ENCODE measurements at regions of chr2 and their contacts with region 1.

Region 1: DNA sequence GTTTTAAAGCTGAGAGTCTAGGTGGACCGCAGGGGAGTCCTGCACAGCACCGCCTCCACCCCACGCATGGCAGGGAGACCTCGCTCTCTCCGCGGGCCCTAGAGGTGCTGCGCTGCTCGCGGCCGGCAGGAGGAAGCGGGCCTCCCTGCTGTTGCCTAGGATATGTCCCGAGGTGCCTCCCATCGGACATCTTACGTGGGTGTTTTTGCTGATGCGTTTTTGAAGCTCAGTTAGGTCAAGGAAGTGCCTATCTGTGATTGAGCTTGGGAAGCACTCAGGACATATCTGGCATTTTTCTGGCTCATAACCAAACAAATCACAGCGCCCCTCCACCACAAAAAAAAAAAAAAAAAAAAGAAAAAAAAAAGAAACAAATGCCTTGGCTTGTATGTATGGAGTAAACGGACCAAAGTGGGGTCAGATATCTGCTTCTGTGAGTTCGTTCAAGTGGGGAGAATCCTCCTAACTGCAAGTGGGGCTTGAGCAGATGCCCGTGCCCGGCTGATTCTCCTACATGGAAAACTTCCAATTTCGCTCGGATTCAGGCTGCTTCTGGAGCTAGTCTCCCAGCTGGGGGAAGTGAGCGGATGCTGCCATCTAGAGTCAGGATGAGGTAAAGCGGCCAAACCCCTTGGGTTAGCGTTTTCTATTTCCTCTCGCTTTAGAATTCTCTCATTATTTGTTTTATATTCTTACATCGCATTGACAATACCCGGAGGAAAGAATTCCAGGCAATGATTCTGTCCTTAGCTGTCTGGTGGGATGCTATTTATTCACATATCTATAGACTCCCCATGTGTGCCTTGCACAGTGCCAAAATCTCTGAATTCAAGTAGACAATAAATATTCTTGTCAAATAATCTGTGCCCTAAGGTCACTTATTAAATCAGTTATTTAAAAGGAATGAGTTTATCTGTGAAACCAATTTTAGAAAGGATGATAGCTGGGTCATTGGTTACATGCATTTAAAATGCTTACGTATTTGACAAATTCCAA is 95.3 kb downstream of the CD8B2 start:
- DNase-seq: peak; percentile 75
- ATAC-seq: peak; percentile 82
- H3K4me3 Mint-ChIP-seq: peak overlapping the region; percentile 82
- H3K27ac Mint-ChIP-seq: no peak overlapping the region
- H3K4me1 Mint-ChIP-seq: peaks cover 12% of the 10 kb centered on the region
- H3K27me3 Mint-ChIP-seq: peaks cover 55% of the 10 kb centered on the region
- CTCF ChIP-seq: peak; percentile 61; the same call in 1 of the 2 replicates

Region 2: DNA sequence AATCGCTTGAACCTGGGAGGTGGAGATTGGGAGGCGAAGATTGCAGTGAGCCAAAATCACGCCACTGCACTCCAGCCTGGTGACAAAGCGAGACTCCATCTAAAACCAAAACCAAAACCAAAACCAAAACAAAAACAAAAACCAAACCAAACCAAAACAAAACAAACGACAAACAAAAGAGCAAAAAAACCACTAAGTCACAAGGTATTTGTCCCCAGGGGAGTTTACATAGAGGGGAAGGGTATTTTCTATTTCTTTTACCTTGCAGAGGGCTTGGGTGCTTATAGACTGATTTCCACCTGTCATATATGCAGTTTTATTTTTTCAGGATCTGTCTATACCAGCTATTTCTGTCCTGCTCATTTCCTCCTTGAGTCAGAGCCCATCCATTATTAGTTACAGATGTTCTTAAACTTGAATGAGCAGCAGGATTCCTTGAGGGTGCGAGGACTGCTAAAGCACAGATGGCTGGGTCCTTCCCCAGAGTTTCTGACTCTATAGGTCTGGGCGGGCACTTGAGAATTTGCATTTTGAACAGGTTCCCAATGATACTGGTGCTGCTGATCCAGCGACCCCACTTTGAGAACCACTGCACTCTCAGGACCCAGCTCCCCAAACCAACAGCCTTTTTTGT is 286.1 kb before region 1 on chr2:
- CTCF ChIA-PET with region 1: no interaction called
- POLR2A ChIA-PET with region 1: no interaction called
- DNase-seq: no peak
- ATAC-seq: no peak
- H3K4me3 Mint-ChIP-seq: no peak overlapping the region
- H3K27ac Mint-ChIP-seq: no peak overlapping the region
- H3K4me1 Mint-ChIP-seq: no peaks in the 10 kb centered on the region
- H3K27me3 Mint-ChIP-seq: no peaks in the 10 kb centered on the region
- CTCF ChIP-seq: no peak

Region 3: DNA sequence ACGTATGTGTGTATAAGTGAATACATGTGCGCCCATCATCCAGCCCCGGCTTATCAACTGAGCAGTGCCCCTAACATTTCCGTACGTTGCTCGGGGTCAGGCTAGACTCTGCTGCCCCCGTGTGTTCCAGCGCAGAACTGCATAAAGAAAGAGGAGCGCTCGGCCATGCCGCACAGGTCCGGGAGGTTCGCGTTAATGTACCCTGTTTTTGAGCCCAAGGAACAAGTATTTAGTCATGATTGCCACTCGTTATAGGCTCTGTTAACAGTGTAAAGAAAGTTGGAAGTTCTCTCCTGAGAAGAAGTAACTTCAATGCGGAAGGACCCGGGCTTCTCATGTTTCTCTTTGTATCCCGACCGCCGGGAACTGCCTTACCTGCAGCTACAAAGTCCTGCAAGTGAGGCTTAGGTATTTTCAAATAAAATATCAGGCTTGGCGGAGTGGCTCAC is 39.6 kb before region 1 on chr2:
- CTCF ChIA-PET with region 1: interaction called, 10 read pairs
- POLR2A ChIA-PET with region 1: no interaction called
- DNase-seq: peak; percentile 86
- ATAC-seq: peak; percentile 91
- H3K4me3 Mint-ChIP-seq: peak overlapping the region; percentile 67
- H3K27ac Mint-ChIP-seq: no peak overlapping the region
- H3K4me1 Mint-ChIP-seq: no peaks in the 10 kb centered on the region
- H3K27me3 Mint-ChIP-seq: no peaks in the 10 kb centered on the region
- CTCF ChIP-seq: peak; percentile 86

Region 4: DNA sequence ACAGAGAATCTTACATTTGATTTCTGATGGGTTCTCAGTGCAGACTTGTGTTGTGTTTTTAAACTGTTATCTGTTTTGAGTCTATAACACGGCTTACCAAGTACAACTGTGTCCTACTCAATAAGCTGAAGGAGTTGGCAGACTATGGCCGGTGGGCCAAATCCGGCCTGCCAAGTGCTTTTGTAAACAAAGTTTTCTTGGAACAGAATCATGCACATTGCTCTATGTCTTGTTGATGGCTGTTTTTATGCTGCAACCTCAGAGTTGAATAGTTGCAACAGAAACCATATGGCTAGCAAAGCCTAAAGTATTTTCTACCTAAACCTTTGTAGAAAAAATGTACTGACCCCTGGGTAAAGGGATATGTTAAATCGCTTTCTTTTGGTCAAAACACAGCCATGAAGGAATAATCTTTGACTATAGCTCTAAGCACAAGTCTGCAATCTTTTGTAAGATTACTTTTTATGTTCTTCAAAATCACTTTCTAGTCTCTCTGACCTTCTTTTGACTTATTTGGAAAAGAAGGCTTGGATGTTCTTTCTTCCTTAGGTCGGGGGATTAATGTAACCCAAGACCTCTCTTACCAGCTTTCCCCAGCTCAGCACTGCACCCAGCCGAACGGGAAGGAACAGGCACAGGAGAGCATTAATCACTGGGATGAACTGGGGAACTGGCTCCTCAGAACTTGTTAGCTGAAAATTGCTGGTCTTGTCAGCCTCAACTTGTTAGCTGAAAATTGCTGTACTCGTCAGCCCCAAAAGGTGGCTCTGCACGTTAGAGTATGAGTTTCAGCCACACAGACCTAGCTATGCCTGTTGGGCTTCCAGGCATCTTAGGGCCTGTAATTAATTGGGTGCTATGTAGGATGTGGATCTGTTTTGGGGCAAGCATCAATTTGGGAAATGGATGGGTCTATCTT is 19.9 kb before region 1 on chr2:
- CTCF ChIA-PET with region 1: interaction called, 39 read pairs
- POLR2A ChIA-PET with region 1: interaction called, 7 read pairs
- DNase-seq: no peak
- ATAC-seq: peak; percentile 75
- H3K4me3 Mint-ChIP-seq: no peak overlapping the region
- H3K27ac Mint-ChIP-seq: 0 out of 2 replicates have a peak overlapping the region, but pooled peaks have one; percentile 2
- H3K4me1 Mint-ChIP-seq: peaks cover 2% of the 10 kb centered on the region; the same call in 1 of the 2 replicates
- H3K27me3 Mint-ChIP-seq: no peaks in the 10 kb centered on the region
- CTCF ChIP-seq: no peak

Region 5: GRCh38 chr2:106596844-106597243 is 14.4 kb after region 1 on chr2:
- CTCF ChIA-PET with region 1: interaction called, 10 read pairs
- POLR2A ChIA-PET with region 1: no interaction called
- DNase-seq: no peak
- ATAC-seq: peak; percentile 61
- H3K4me3 Mint-ChIP-seq: no peak overlapping the region
- H3K27ac Mint-ChIP-seq: no peak overlapping the region
- H3K4me1 Mint-ChIP-seq: no peaks in the 10 kb centered on the region
- H3K27me3 Mint-ChIP-seq: no peaks in the 10 kb centered on the region
- CTCF ChIP-seq: peak; percentile 51; the same call in 1 of the 2 replicates